Activated CD4-positive, alpha-beta T cell treated with anti-CD3 and anti-CD28 coated beads, Interleukin-2, amount 10 ng/mL, durations not matched to agents 7 days and 5 days (primary cell): ENCODE measurements at regions of chr2 and their contacts with region 1.

Region 1: GRCh38 chr2:216044883-216045486 is 31.6 kb upstream of the MREG start:
- DNase-seq: no peak
- H3K4me3 Mint-ChIP-seq: no peak overlapping the region
- H3K27ac Mint-ChIP-seq: no peak overlapping the region
- H3K4me1 Mint-ChIP-seq: peaks cover 5% of the 10 kb centered on the region
- H3K27me3 Mint-ChIP-seq: no peaks in the 10 kb centered on the region

Region 2: GRCh38 chr2:216034065-216034464 is 10.9 kb before region 1 on chr2:
- CTCF ChIA-PET with region 1: interaction called, 16 read pairs
- POLR2A ChIA-PET with region 1: no interaction called
- DNase-seq: peak; percentile 84
- H3K4me3 Mint-ChIP-seq: no peak overlapping the region
- H3K27ac Mint-ChIP-seq: no peak overlapping the region
- H3K4me1 Mint-ChIP-seq: peaks cover 34% of the 10 kb centered on the region
- H3K27me3 Mint-ChIP-seq: no peaks in the 10 kb centered on the region

Region 3: DNA sequence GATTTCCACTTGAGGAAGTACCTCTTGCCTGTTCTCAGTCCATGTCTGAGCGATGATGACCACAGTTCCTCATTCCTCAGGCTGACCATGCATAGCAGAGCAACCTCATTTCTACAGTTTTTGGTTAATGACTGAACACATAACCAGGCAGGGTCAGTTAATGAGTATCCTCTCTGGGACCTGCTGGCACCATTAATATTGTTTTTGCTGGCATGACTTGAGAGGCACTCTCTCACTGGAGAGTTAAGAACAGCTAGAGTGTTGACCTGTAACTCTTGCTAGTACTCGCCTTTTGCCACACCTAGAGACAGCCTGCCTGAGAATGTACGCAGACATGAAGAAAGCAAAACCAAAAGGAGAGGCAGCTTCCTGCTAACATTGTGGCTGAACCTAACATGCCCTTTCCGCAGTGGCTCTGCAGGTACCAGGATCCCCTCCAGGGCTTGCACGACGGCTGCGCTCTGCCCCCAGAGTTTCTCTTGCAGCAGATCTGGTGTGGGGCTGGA is 12.8 kb after region 1 on chr2:
- CTCF ChIA-PET with region 1: interaction called, 15 read pairs
- POLR2A ChIA-PET with region 1: interaction called, 3 read pairs
- DNase-seq: peak; percentile 79
- H3K4me3 Mint-ChIP-seq: peak overlapping the region; percentile 67
- H3K27ac Mint-ChIP-seq: peak overlapping the region; percentile 94
- H3K4me1 Mint-ChIP-seq: peaks cover 35% of the 10 kb centered on the region
- H3K27me3 Mint-ChIP-seq: no peaks in the 10 kb centered on the region